PC-9 (cell line): ENCODE measurements at regions of chr10 and their contacts with region 1.

Region 1: GRCh38 chr10:784403-785088 is 95.1 kb upstream of the DIP2C start:
- DNase-seq: peak in 1 of 2 experiments; percentile 49
- H3K4me3 ChIP-seq: no peak overlapping the region; the same call in 1 of the 2 replicates
- H3K27ac ChIP-seq: no peak overlapping the region
- H3K4me1 ChIP-seq: no peaks in the 10 kb centered on the region
- H3K27me3 ChIP-seq: 0 out of 2 replicates have a peak, but pooled peaks cover 6% of the 10 kb centered on the region
- CTCF ChIP-seq: no peak

Region 2: DNA sequence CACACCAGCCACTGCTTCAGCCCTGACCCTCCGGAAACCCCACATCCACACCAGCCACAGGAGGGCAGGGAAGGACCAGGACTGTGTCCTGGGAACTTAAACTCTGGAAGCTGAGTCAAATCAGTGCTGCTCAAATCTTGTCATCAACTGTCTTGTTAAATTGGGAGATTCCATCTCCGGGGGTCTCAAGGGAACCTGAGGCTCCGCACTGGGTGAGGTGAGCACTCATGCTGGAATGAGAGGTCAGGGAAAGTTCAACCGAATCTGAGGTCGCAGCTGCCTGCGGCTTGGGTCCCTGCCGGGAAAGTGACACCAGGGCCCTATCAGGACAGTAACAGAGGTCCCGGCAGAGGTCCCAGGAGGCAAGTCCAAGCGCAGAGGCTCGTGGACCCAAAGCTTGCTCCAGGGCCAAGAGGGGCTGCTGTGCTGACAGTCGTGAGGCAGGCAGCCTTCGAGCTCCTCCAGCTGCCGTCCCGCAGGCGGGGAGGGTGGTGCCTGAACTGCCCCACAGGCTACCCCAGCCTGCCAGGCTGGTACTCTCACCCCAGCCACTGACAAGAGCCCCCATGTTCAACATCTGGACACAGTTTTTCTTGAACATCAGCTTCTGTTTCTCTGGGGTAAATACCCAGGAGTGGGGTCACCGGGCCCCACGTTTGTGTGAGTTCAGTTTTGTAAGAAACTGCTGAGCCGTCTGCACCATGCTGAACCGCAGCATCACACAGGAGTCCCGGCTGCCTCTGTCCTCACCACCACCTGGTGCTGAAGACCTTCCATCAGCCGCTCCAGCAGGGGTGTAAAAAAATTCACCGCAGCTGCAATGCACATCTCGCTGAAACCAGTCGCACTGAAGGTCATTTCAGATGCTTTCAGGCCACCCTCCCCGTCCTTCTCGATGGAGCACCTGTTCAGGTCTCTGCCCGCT is 196.0 kb before region 1 on chr10:
- CTCF ChIA-PET with region 1: no interaction called
- POLR2A ChIA-PET with region 1: no interaction called
- intact Hi-C with region 1: loop called (anchors 5 kb)
- DNase-seq: peak in 1 of 2 experiments; percentile 14
- H3K4me3 ChIP-seq: no peak overlapping the region
- H3K27ac ChIP-seq: no peak overlapping the region
- H3K4me1 ChIP-seq: no peaks in the 10 kb centered on the region
- H3K27me3 ChIP-seq: peaks cover 47% of the 10 kb centered on the region
- CTCF ChIP-seq: no peak

Region 3: GRCh38 chr10:844552-844951 is 60.0 kb after region 1 on chr10:
- CTCF ChIA-PET with region 1: no interaction called
- POLR2A ChIA-PET with region 1: no interaction called
- intact Hi-C with region 1: no loop called
- DNase-seq: no peak
- H3K4me3 ChIP-seq: no peak overlapping the region
- H3K27ac ChIP-seq: no peak overlapping the region
- H3K4me1 ChIP-seq: no peaks in the 10 kb centered on the region
- H3K27me3 ChIP-seq: no peaks in the 10 kb centered on the region
- CTCF ChIP-seq: no peak